Left colon (tissue), 2 donors: ENCODE measurements at regions of chr19 and their contacts with region 1.

Region 1: GRCh38 chr19:8641908-8642547 is 11.6 kb downstream of the NFILZ start:
- DNase-seq: no peak
- ATAC-seq: peak; percentile 58

Region 2: DNA sequence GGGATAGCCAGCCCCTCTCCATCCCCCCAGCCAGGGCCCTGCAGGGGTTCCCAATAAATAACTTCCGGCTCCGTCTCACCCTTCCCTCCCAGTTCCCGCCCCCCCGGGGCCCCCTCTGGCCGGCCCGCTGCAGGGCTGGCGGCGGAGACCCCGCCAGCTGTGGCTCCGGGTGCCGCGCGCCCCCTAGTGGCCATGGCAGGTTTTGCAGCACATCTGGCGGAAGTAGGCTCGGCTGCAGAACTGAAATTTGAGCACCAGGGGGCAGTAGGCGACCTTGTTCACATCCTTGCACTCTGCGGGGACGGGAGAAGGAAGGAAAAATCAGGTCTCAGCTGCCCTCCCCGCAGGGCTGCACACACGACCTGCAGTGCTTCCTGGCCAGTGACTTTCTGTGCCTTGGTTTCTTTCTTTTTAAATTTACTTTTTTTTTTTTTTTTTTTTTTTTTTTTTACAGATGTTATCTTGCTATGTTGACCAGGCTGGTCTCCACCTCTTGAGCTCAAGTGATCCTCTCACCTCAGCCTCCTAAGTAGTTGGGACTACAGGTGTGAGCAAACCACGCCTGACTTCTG is 61.2 kb before region 1 on chr19:
- intact Hi-C with region 1: loop called in 1 of 2 experiments (anchors 10 kb)
- DNase-seq: peak; percentile 77 to 87
- ATAC-seq: peak; percentile 66

Region 3: DNA sequence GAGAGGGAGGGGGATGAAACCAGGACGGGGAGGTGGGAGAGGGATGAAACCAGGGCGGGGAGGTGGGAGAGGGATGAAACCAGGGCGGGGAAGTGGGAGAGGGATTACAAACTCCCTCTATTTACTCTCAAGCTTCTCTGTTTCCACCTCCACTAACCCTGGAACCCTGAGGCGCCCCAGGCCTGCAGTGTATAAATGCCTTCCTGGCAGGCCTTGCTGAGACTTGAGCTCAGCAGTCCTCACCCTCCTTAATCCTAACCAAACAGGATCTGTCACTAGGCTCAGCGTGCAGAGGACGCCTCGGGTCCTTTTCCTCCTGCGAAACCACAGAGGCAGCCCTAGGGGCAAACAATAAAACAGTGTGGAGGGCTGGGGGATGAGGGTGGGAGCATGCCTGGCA is 412.7 kb after region 1 on chr19:
- intact Hi-C with region 1: no loop called
- DNase-seq: no peak
- ATAC-seq: no peak